ENCODE measurements at regions of chr15 and their contacts with region 1.

Region 1: GRCh38 chr15:100131321-100132224 is 210.2 kb downstream of the ADAMTS17 start:
- DNase-seq: no peak
- H3K4me3 Mint-ChIP-seq: peak overlapping the region; percentile 37
- H3K27ac Mint-ChIP-seq: no peak overlapping the region
- H3K4me1 Mint-ChIP-seq: no peaks in the 10 kb centered on the region
- H3K27me3 Mint-ChIP-seq: peaks cover 6% of the 10 kb centered on the region

Region 2: DNA sequence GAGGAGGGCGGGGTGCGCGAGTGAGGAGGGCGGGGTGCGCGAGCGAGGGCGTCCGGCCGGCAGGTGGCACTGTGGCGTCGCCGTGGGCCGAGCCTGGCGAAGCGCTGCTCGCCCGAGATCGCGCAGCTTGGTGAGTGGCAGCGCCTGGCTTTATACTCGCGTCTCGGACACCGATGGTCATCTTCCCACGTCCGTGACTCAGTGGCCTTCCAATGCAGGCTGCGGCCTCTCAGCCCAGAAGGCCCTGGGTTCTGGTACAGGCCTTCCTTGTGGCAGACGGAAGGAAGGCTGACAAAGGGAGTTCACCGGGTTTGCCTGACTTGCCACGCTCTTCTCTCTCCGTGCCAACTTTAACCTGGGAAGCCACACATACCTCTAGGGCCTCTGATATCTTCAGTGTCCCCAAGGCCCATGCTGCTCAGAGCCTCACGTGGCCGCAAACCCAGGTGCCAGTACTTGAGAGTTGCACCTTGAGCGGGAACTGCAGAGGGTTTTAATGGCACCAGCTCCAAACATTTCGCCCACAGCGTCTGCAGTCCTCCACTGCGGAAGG is 203.1 kb before region 1 on chr15:
- intact Hi-C with region 1: loop called (anchors 5 kb)
- DNase-seq: peak; percentile 81
- H3K4me3 Mint-ChIP-seq: peak overlapping the region; percentile 84
- H3K27ac Mint-ChIP-seq: peak overlapping the region; percentile 70
- H3K4me1 Mint-ChIP-seq: peaks cover 14% of the 10 kb centered on the region
- H3K27me3 Mint-ChIP-seq: peaks cover 24% of the 10 kb centered on the region

Region 3: DNA sequence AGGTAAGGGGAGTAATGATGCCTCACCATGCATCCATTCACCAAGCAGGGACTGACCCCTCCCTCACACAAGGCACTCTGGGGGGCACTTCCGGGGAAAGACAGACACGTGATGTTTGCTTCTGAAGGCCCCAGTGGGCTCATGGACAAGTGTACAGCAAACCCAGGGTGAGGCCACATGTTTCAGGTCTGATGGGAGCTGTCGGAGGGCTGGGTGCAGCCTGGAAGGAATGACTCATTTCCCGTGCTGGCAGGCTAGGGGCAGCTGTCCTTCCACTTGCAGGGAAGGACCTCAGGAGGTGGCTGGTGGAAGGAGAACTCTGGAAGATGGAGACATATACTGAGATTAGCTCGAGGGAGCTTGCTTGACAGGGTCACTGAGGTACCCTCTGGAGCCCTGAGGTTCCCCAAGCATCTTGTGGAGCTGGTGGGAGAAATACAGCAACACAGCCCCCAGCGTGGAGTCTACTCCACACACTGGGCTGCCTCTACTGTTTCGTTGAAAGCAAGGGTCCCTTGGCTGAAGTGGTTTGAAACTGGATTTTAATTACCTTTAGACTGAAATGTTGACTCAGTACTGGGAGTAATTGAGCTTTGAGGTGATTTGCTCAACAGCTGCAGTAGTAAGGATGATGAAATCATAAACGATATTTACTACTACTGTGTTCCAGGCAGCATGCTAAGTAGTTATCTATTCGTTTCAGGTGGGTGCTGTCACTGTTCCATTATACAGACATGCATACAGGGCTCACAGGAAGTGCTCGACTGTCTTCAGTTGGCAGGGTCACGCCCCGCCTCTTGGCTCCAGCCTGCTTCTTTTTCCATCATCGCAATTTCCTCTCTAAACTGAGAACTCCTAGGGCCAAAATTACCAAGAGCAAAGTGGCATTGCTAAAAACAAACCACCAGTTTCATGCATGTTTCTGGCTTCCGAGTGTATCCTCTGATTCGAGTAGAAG is 20.2 kb before region 1 on chr15:
- intact Hi-C with region 1: no loop called
- DNase-seq: no peak
- H3K4me3 Mint-ChIP-seq: peak overlapping the region; percentile 37
- H3K27ac Mint-ChIP-seq: peak overlapping the region; percentile 94
- H3K4me1 Mint-ChIP-seq: peaks cover 28% of the 10 kb centered on the region
- H3K27me3 Mint-ChIP-seq: no peaks in the 10 kb centered on the region

Measured in activated T-helper 2 cell treated with anti-CD3 and anti-CD28 coated beads, Interferon-gamma antibody, Interleukin-2, Interleukin-4, amounts not matched to agents 10 μg/mL and 5 μg/mL and 100 μg/mL, durations not matched to agents 14 hours and 24 hours and 36 hours (primary cell).